Aorta (tissue), 5 donors: ENCODE measurements at regions of chr11 and their contacts with region 1.

Region 1: DNA sequence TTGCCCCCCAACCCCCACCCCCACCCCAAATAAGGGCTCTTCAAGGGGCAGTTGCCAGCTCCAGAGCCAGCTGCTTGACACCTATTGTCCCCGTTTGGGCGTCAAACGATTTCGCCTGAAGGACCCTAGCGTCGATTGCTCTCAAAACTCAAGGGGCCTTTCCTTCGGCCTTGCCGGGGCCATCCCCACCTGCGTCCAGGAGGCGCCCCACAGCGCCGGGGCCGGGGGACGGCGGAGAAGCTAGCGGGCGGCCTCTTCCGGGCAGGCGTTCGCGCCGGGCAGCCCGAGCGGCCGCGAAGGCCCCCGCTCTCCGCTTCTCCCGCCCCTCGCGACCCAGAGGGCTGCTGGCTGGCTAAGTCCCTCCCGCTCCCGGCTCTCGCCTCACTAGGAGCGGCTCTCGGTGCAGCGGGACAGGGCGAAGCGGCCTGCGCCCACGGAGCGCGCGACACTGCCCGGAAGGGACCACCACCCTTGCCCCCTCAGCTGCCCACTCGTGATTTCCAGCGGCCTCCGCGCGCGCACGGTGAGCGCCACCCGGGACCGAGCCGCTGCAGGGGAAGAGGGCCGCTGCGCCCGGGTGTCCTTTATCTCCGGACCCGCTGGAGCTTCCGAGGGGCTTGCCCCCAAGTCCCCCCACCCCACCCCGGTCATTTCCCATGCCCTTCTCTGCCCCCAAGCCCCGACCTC is at the start of gene CAPRIN1:
- DNase-seq: peak; percentile 93 to 94
- ATAC-seq: peak; percentile 96
- H3K4me3 ChIP-seq: peak within 1 kb of the TSS; percentile 89 to 90
- H3K27ac ChIP-seq: peak within 1 kb of the TSS; percentile 91 to 99
- H3K4me1 ChIP-seq: no peaks in the 10 kb centered on the region
- H3K27me3 ChIP-seq: no peaks in the 10 kb centered on the region
- total RNA-seq, gene CAPRIN1: 123 to 147 TPM

Region 2: GRCh38 chr11:33996498-33997454 is 54.7 kb before region 1 on chr11:
- intact Hi-C with region 1: loop called in 1 of 2 experiments (anchors 5 kb)
- DNase-seq: peak; percentile 73 to 78
- ATAC-seq: peak; percentile 93
- H3K4me3 ChIP-seq: no peak overlapping the region
- H3K27ac ChIP-seq: no peak overlapping the region
- H3K4me1 ChIP-seq: no peaks in the 10 kb centered on the region
- H3K27me3 ChIP-seq: no peaks in the 10 kb centered on the region

Region 3: GRCh38 chr11:34028425-34028824 is 23.1 kb before region 1 on chr11:
- intact Hi-C with region 1: loop called in 1 of 2 experiments (anchors 2 kb)
- DNase-seq: peak in 1 of 2 donors; percentile 71
- ATAC-seq: peak; percentile 41
- H3K4me3 ChIP-seq: peak overlapping the region in 1 of 2 donors; percentile 41
- H3K27ac ChIP-seq: peak overlapping the region; percentile 49 to 86
- H3K4me1 ChIP-seq: no peaks in the 10 kb centered on the region
- H3K27me3 ChIP-seq: no peaks in the 10 kb centered on the region

Region 4: GRCh38 chr11:34105079-34105956 is 53.8 kb after region 1 on chr11 and contains the start of gene NAT10:
- intact Hi-C with region 1: loop called (anchors 2 kb)
- DNase-seq: peak; percentile 97 to 98
- ATAC-seq: peak; percentile 99
- H3K4me3 ChIP-seq: peak within 1 kb of the TSS; percentile 27 to 52
- H3K27ac ChIP-seq: peak within 1 kb of the TSS; percentile 59 to 62
- H3K4me1 ChIP-seq: no peaks in the 10 kb centered on the region
- H3K27me3 ChIP-seq: no peaks in the 10 kb centered on the region
- total RNA-seq, gene NAT10: 33.6 to 42.4 TPM